Heart left ventricle (tissue), 16 donors: ENCODE measurements at regions of chr9 and their contacts with region 1.

Region 1: DNA sequence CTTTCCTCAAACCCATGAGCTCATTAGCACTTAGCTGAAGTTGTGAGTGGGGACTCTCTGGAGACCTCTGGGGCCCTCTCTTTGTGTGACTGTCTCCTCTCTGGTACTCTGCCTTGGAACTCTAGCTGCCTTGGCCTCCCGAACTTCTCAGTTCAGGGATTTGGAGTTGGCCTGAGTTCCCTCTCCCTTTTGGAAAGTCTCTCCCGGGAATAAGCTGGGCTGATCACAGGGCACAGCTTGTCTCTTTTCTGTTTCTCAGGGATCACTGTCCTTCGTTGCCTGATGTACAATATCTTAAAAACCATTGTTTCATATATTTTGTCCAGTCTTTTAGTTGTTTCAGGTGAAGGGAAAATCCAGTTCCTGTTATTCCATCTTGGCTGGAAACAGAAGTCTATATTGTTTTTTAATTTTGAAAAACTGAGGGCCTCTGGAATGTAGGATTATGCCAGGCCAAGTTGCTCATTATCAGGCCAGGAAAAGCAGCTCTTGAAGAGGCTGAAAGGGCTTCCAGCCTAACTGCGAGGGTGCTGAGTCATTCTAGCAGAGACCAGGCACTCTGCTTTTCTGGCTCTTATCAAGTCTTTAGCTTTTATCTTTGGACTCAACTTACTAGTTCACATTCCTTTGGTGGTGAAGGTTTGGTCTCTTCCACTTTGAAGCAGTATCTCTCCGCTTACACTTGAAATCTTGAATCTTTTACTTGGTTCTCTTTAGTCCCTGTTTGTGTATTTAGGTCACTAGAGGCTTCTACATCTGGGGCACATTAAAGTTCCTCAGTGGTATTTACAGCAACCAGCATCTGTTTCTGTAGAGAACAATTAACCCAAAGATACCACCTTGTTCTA is 8.4 kb upstream of the RGS3 start:
- DNase-seq: peak in 4 of 5 donors; percentile 58 to 80 (median 68)
- ATAC-seq: peak; percentile 85 to 96 (median 94)
- H3K4me3 ChIP-seq: no peak overlapping the region
- H3K27ac ChIP-seq: peak overlapping the region; percentile 84 to 97 (median 90)
- H3K4me1 ChIP-seq: peaks cover 4 to 39% (median 28%) of the 10 kb centered on the region in 12 donors
- H3K27me3 ChIP-seq: no peaks in the 10 kb centered on the region
- CTCF ChIP-seq: peak in 1 of 12 donors; percentile 8
- POLR2A ChIP-seq: no peak

Region 2: GRCh38 chr9:113492343-113493212 is 37.4 kb after region 1 on chr9:
- intact Hi-C with region 1: loop called in 1 of 10 experiments (anchors 5 kb)
- DNase-seq: peak in 2 of 5 donors; percentile 59 to 65
- ATAC-seq: peak; percentile 27 to 65 (median 38)
- H3K4me3 ChIP-seq: no peak overlapping the region
- H3K27ac ChIP-seq: peak overlapping the region in 11 of 12 donors; percentile 52 to 85 (median 73)
- H3K4me1 ChIP-seq: peaks cover 4 to 51% (median 23%) of the 10 kb centered on the region in 12 donors
- H3K27me3 ChIP-seq: no peaks in the 10 kb centered on the region
- CTCF ChIP-seq: no peak
- POLR2A ChIP-seq: no peak

Region 3: DNA sequence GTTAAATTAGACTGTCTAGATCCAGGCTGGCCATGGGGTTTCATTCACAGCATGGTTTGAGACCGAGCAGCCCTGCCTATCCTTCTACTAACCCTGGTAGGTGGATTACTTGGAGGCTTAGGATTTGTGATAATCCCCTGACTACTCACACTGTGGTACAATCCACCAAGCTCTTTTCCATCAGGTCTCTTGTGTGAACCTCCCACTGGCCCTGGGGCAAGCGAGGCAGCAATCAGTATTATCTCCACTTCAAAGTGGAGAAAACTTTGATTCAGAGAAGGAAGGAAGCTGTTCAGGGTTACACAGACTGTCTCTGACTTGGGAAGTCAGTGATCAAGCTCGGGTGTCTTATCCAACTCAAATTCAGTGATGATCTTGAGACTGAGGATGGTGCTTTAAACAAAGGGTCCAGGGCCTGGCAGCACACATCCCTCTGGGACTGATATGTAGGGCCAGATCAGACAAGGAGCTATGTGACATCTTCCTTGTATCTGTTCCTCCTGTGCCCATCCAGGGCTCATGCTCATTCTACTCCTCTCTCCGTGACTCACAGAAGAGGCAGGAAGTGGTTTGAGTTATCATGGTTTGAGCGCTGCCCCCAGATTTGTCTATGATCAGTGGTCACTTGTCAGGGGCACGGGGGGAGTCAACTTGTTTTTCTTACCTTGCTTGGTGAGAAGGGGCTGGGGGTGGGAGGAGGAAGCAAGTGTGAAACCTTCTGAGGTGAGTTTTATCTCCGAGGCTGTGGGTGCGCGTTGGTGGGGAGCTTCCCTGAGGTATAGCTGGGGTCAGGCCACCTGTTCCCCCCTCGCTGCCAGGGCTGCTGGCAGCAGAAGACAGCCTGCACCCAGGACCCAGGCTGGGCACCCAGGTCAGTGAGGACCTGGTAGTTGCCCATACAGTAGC is 57.0 kb after region 1 on chr9:
- intact Hi-C with region 1: loop called in 1 of 10 experiments (anchors 10 kb)
- DNase-seq: no peak
- ATAC-seq: no peak
- H3K4me3 ChIP-seq: no peak overlapping the region
- H3K27ac ChIP-seq: peak overlapping the region in 11 of 12 donors; percentile 55 to 84 (median 76)
- H3K4me1 ChIP-seq: peaks cover 0 to 64% (median 38%) of the 10 kb centered on the region in 12 donors
- H3K27me3 ChIP-seq: no peaks in the 10 kb centered on the region
- CTCF ChIP-seq: no peak
- POLR2A ChIP-seq: no peak

Region 4: DNA sequence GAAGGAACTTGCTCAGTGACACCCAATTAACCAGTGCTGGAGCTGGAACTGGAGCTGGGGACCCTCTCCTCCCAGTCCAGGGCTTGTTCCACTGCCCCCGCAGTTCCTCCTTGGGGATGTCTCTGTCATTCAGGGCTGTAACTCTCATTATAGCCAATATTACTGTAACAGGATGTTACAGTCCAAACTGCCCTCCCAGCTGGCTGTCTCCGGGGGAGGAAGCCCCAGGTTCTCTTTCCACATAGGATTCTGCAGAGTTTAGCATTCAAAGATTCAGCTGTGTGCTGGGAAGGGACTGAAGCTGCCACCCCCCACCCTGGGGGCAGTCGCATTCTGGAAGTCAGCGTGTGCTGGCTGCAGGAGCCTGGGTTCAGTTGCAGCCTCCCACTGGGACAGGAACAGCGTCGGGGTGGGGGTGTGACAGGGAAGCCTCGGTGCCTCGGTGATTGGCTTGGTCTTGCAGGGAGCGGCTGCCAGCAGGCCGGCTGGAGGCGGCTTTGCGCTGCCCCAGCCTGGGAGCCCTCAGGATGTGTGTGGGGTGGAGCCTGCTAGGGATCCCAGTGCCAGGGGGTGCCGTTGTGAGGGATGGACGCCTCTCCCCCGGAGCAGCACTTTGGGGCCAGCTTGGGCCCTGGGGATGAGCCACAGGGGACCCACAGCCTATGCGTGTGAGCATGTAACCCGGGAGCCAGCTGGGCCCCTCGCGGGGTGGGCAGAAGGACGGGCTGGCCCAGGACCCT is 109.5 kb after region 1 on chr9:
- intact Hi-C with region 1: no loop called
- DNase-seq: peak; percentile 78 to 87 (median 85)
- ATAC-seq: peak; percentile 75 to 86 (median 78)
- H3K4me3 ChIP-seq: peak overlapping the region; percentile 28 to 67 (median 50)
- H3K27ac ChIP-seq: peak overlapping the region; percentile 80 to 99 (median 92)
- H3K4me1 ChIP-seq: peaks cover 24 to 81% (median 70%) of the 10 kb centered on the region in 12 donors
- H3K27me3 ChIP-seq: no peaks in the 10 kb centered on the region
- CTCF ChIP-seq: no peak
- POLR2A ChIP-seq: peak in 1 of 2 donors; percentile 27